Activated naive CD4-positive, alpha-beta T cell treated with anti-CD3 and anti-CD28 coated beads for 36 hours (primary cell): ENCODE measurements at regions of chr3 and their contacts with region 1.

Region 1: DNA sequence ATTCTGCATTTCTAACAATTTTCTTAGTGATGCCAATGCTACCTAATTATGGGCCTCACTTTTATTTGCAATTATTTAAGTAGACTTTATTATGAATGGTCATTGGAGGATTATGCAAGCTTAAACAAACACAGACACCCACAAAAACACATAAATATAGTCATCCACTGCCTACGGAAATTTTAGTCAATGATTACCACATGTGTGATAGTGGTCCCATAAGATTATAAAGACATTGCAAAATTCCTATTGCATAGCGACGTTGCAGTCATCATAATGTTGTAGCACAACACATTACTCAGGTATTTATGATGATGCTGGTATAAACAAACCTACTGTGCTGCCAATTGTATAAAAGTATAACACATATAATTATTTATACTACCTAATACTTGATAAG is 247.8 kb upstream of the ALCAM start:
- DNase-seq: no peak
- H3K4me3 Mint-ChIP-seq: no peak overlapping the region
- H3K27ac Mint-ChIP-seq: no peak overlapping the region
- H3K4me1 Mint-ChIP-seq: no peaks in the 10 kb centered on the region
- H3K27me3 Mint-ChIP-seq: no peaks in the 10 kb centered on the region

Region 2: DNA sequence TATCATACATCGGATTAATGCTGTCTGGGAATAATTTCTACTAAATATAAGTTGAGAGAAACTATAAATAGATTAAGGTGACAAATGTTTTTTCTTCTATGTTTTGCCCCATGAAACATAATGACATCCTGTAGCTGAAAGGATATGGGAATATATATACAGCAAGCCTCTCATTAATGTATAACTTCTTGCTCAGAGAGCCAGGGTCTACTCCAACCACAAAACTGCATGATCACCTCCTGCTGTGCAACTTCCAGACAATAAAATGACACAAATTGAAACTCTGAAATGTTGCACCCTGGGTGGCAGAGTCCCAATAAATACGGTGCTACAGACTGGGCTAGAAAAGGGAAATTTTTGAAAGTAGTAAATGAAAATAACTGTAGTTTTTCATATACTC is 1321.8 kb after region 1 on chr3:
- CTCF ChIA-PET with region 1: no interaction called
- intact Hi-C with region 1: loop called (anchors 5 kb)
- DNase-seq: no peak
- H3K4me3 Mint-ChIP-seq: no peak overlapping the region
- H3K27ac Mint-ChIP-seq: no peak overlapping the region
- H3K4me1 Mint-ChIP-seq: peaks cover 7% of the 10 kb centered on the region
- H3K27me3 Mint-ChIP-seq: no peaks in the 10 kb centered on the region